Mammary epithelial cell (primary cell): ENCODE measurements at regions of chr18 and their contacts with region 1.

Region 1: DNA sequence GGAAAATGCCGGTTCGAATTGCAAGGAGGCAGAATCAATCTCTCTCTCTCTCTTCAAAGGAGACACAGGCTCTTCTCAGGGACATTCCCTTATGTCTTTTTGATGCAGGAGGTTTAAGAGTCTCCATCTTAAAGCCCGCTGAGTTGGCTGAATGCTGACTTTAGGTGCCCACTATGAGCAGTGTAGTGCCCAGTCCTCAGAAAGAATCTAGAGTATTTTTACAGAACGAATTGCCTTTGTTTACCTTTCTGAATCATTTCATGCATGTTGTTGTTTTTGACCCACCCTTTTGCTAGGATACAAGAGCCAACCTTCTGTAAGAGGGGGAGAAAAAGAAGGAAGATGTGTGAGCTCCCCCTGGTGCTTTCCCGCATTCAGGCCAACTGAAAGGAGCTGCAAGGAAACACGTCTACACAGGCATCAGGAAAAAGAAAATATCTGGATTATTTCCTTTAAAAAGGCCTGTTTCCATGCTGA is 193.5 kb upstream of the TCF4 start:
- DNase-seq: peak; percentile 44
- H3K4me3 ChIP-seq: no peak overlapping the region
- H3K27ac ChIP-seq: no peak overlapping the region
- H3K4me1 ChIP-seq: peaks cover 14% of the 10 kb centered on the region
- H3K27me3 ChIP-seq: no peaks in the 10 kb centered on the region
- CTCF ChIP-seq: peak; percentile 67 to 85

Region 2: DNA sequence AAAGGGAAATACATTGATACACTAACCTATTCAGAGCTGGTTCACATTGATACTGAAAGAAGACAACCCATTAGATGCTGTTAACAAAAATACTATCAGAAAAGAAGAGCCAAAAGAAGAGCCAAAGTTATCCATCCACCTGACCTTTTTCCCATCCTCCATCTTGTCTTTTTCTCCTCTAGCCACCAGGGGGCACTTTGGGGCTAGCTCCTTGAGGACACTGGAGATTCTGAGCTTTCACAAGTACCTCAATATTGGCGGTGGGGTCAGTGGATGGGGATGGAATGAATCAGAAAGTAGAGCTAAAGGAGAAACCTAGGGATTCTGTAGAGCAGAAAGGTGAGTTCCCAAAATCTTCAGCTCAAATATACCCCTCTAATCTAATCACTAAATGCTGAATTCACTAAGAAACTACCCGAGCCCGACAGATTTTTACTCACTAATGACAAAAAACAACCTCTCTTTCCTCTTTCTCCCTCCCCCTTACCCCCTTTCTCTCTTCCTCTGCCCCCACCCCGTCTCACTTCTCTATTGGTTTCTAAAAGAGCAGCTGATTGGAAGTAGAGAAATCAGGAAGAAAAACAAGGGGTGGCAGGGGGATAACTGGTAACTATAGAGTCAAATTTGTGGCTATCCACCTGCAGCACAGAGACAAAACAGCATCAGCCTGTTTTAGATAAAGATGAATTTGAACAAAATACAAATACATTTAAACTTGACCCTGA is 396.8 kb before region 1 on chr18:
- CTCF ChIA-PET with region 1: no interaction called
- dilution Hi-C with region 1: no loop called
- in situ Hi-C with region 1: no loop called
- intact Hi-C with region 1: loop called (anchors 1 kb)
- DNase-seq: peak; percentile 32
- H3K4me3 ChIP-seq: no peak overlapping the region
- H3K27ac ChIP-seq: no peak overlapping the region
- H3K4me1 ChIP-seq: no peaks in the 10 kb centered on the region
- H3K27me3 ChIP-seq: no peaks in the 10 kb centered on the region
- CTCF ChIP-seq: peak; percentile 73 to 80

Region 3: GRCh38 chr18:55415258-55415871 is 366.2 kb before region 1 on chr18:
- CTCF ChIA-PET with region 1: interaction called, 4 read pairs
- dilution Hi-C with region 1: no loop called
- in situ Hi-C with region 1: loop called (anchors 10 to 25 kb)
- intact Hi-C with region 1: loop called (anchors 1 kb)
- DNase-seq: peak; percentile 43
- H3K4me3 ChIP-seq: no peak overlapping the region
- H3K27ac ChIP-seq: no peak overlapping the region
- H3K4me1 ChIP-seq: no peaks in the 10 kb centered on the region
- H3K27me3 ChIP-seq: no peaks in the 10 kb centered on the region
- CTCF ChIP-seq: peak; percentile 85 to 90

Region 4: GRCh38 chr18:55477499-55477859 is 304.0 kb before region 1 on chr18:
- CTCF ChIA-PET with region 1: no interaction called
- dilution Hi-C with region 1: no loop called
- in situ Hi-C with region 1: no loop called
- intact Hi-C with region 1: loop called (anchors 5 kb)
- DNase-seq: peak; percentile 65
- H3K4me3 ChIP-seq: peak overlapping the region; percentile 28 to 54 (median 45)
- H3K27ac ChIP-seq: peak overlapping the region; percentile 36
- H3K4me1 ChIP-seq: peaks cover 12% of the 10 kb centered on the region
- H3K27me3 ChIP-seq: no peaks in the 10 kb centered on the region
- CTCF ChIP-seq: peak; percentile 32 to 60

Region 5: GRCh38 chr18:55500316-55501086 is 281.0 kb before region 1 on chr18:
- CTCF ChIA-PET with region 1: no interaction called
- dilution Hi-C with region 1: no loop called
- in situ Hi-C with region 1: no loop called
- intact Hi-C with region 1: loop called (anchors 5 kb)
- DNase-seq: peak; percentile 41
- H3K4me3 ChIP-seq: no peak overlapping the region
- H3K27ac ChIP-seq: no peak overlapping the region
- H3K4me1 ChIP-seq: no peaks in the 10 kb centered on the region
- H3K27me3 ChIP-seq: no peaks in the 10 kb centered on the region
- CTCF ChIP-seq: no peak

Region 6: DNA sequence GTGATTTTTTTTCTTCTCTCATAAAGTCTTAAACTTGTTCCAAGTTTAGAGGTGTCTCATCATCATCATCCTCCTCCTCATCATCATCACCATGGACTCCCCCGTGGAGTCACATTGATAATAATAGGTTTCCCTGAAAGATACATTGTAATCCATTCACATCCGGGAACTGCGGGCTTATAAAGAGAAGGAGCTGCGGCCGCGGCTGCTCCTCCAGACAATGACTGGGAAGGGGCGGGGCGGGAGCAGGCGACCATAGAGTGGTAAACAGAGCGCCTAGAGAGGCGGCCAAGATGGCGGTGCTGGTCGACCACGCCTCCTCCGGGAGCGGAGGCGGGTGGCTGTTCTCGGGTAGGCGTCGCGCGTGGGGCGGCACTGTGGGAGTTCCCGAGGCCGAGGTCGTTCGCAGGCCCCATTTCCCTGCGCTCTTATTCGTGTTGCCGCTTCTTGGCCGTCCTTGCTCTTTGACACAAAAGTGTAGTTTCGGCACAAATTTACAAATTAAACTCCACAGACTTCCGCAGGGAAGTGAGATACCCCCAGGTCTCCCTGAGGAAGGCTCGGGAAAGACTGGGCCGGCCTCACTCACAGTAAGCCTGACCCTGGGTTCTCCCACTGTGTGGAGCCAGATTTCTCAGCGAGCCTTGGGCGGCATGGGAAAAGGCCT is 191.8 kb before region 1 on chr18:
- CTCF ChIA-PET with region 1: no interaction called
- dilution Hi-C with region 1: no loop called
- in situ Hi-C with region 1: no loop called
- intact Hi-C with region 1: loop called (anchors 2 kb)
- DNase-seq: peak; percentile 91
- H3K4me3 ChIP-seq: peak overlapping the region; percentile 56 to 82 (median 65)
- H3K27ac ChIP-seq: peak overlapping the region; percentile 52
- H3K4me1 ChIP-seq: peaks cover 10% of the 10 kb centered on the region
- H3K27me3 ChIP-seq: no peaks in the 10 kb centered on the region
- CTCF ChIP-seq: no peak

Region 7: GRCh38 chr18:55763298-55763697 is 18.2 kb before region 1 on chr18:
- CTCF ChIA-PET with region 1: no interaction called
- dilution Hi-C with region 1: no loop called
- in situ Hi-C with region 1: no loop called
- intact Hi-C with region 1: no loop called
- DNase-seq: peak; percentile 72
- H3K4me3 ChIP-seq: no peak overlapping the region
- H3K27ac ChIP-seq: no peak overlapping the region
- H3K4me1 ChIP-seq: peaks cover 9% of the 10 kb centered on the region
- H3K27me3 ChIP-seq: no peaks in the 10 kb centered on the region
- CTCF ChIP-seq: no peak

Region 8: DNA sequence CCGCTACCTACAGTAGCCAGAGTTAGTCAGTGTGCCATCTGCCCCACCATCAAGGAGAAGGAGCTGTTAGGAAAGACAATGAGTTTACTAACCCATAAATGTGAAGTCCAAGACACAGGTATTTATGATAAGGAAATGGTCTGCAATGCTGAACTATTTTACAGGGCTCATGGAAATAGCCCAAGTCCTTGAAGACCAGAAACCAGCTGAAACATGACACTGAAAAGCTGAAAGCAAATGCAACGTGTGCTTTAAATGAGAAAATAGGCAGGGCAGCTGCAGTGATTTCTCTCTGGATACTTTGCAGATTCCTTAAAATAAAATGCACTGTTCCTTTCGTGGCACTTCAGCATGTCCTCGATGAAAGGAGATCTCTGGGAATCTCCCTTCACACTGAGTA is 62.9 kb after region 1 on chr18:
- CTCF ChIA-PET with region 1: no interaction called
- dilution Hi-C with region 1: no loop called
- in situ Hi-C with region 1: no loop called
- intact Hi-C with region 1: no loop called
- DNase-seq: no peak
- H3K4me3 ChIP-seq: no peak overlapping the region
- H3K27ac ChIP-seq: no peak overlapping the region
- H3K4me1 ChIP-seq: peaks cover 6% of the 10 kb centered on the region
- H3K27me3 ChIP-seq: no peaks in the 10 kb centered on the region
- CTCF ChIP-seq: no peak

Region 9: GRCh38 chr18:55856229-55856628 is 74.7 kb after region 1 on chr18:
- CTCF ChIA-PET with region 1: interaction called, 3 read pairs
- dilution Hi-C with region 1: no loop called
- in situ Hi-C with region 1: no loop called
- intact Hi-C with region 1: loop called (anchors 2 kb)
- DNase-seq: peak; percentile 95
- H3K4me3 ChIP-seq: no peak overlapping the region
- H3K27ac ChIP-seq: peak overlapping the region; percentile 60
- H3K4me1 ChIP-seq: peaks cover 25% of the 10 kb centered on the region
- H3K27me3 ChIP-seq: no peaks in the 10 kb centered on the region
- CTCF ChIP-seq: no peak